Activated CD8-positive, alpha-beta T cell treated with anti-CD3 and anti-CD28 coated beads, Interleukin-2, amount 10 ng/mL, durations not matched to agents 7 days and 5 days (primary cell): ENCODE measurements at regions of chr16 and their contacts with region 1.

Region 1: DNA sequence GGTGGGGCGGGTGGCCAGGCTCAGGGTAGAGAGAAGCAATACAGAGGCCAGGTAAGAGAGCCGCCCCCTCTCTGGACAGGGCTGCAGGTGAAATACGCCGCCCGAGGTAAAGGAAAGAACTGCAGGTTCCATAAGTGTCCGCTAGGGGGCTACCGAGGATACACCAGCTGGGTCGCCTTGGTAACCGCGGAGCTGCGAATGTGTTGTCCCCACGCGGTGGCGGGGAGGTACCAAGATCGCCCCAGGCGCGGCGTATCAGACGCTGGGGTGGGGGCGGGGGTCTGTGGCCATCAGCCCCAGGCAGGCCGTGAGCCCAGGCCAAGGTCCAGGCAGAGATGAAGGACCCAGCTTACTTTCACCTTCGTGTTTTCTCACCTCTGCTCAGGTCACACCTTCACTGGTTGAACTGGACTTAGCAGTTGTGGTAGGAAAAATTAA is 18.4 kb upstream of the ZFP90 start:
- DNase-seq: peak; percentile 93
- ATAC-seq: peak; percentile 95
- H3K4me3 Mint-ChIP-seq: peak overlapping the region; percentile 18
- H3K27ac Mint-ChIP-seq: peak overlapping the region; percentile 34
- H3K4me1 Mint-ChIP-seq: peaks cover 8% of the 10 kb centered on the region
- H3K27me3 Mint-ChIP-seq: no peaks in the 10 kb centered on the region

Region 2: GRCh38 chr16:67608364-67608763 is 912.3 kb before region 1 on chr16:
- CTCF ChIA-PET with region 1: no interaction called
- POLR2A ChIA-PET with region 1: no interaction called
- DNase-seq: no peak
- ATAC-seq: no peak
- H3K4me3 Mint-ChIP-seq: no peak overlapping the region
- H3K27ac Mint-ChIP-seq: no peak overlapping the region
- H3K4me1 Mint-ChIP-seq: no peaks in the 10 kb centered on the region
- H3K27me3 Mint-ChIP-seq: no peaks in the 10 kb centered on the region

Region 3: GRCh38 chr16:68040507-68041288 is 480.0 kb before region 1 on chr16:
- CTCF ChIA-PET with region 1: no interaction called
- POLR2A ChIA-PET with region 1: no interaction called
- DNase-seq: peak; percentile 93
- ATAC-seq: peak; percentile 99
- H3K4me3 Mint-ChIP-seq: no peak overlapping the region
- H3K27ac Mint-ChIP-seq: peak overlapping the region; percentile 69
- H3K4me1 Mint-ChIP-seq: peaks cover 26% of the 10 kb centered on the region
- H3K27me3 Mint-ChIP-seq: no peaks in the 10 kb centered on the region

Region 4: DNA sequence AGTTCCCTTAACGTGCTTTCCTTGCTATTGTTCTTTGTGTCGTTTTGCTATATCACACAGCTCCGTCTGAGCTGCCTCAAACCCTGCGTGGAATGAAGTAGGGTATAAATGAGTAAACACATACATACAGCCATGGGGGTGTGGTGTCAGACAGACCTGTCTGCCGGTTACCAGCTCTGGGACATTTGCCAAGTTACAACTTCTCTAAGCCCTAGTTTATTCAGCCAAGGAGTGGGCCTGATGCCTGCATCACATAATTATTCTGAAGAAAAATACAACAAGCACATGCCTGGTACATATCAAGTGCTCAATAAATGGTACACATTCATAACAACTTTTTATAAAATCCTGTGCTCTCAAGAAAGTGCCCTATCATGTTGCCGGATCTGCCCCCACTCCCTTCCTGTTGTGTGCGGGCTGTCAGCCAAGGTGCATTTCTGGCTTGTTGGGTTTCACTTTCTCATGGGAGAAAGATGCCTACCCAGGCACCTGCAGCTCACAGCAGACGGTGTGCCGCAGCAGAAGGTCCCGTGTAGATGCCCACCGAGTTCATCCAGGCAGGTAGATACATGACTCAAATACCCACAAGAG is 102.9 kb before region 1 on chr16:
- CTCF ChIA-PET with region 1: interaction called, 18 read pairs
- POLR2A ChIA-PET with region 1: no interaction called
- DNase-seq: peak; percentile 87
- ATAC-seq: peak; percentile 97
- H3K4me3 Mint-ChIP-seq: peak overlapping the region; percentile 76
- H3K27ac Mint-ChIP-seq: peak overlapping the region; percentile 90
- H3K4me1 Mint-ChIP-seq: peaks cover 36% of the 10 kb centered on the region
- H3K27me3 Mint-ChIP-seq: no peaks in the 10 kb centered on the region

Region 5: GRCh38 chr16:68470461-68471150 is 50.1 kb before region 1 on chr16:
- CTCF ChIA-PET with region 1: interaction called, 31 read pairs
- POLR2A ChIA-PET with region 1: no interaction called
- DNase-seq: peak; percentile 38
- ATAC-seq: peak; percentile 58
- H3K4me3 Mint-ChIP-seq: peak overlapping the region; percentile 69
- H3K27ac Mint-ChIP-seq: peak overlapping the region; percentile 81
- H3K4me1 Mint-ChIP-seq: peaks cover 46% of the 10 kb centered on the region
- H3K27me3 Mint-ChIP-seq: peaks cover 10% of the 10 kb centered on the region

Region 6: DNA sequence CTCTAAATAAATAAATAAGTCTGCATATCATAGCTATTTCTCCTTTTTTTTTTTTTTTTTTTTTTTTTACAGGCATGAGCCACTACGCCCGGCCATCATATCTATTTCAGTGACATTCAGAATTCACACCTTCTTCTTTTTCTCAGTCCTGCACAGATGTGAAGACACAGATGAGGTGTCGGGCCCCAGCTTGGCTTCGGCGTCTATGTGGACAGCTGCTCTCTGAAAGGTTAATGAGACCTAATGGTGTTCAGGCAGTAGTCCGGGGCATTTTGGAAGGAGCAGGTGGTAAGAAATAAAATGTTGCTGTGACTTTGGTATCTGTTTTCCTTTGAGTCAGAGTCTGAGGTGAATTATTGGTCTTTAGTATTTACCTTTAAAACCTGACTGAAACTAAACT is 346.3 kb after region 1 on chr16:
- CTCF ChIA-PET with region 1: no interaction called
- POLR2A ChIA-PET with region 1: no interaction called
- DNase-seq: no peak
- ATAC-seq: no peak
- H3K4me3 Mint-ChIP-seq: no peak overlapping the region
- H3K27ac Mint-ChIP-seq: no peak overlapping the region
- H3K4me1 Mint-ChIP-seq: peaks cover 4% of the 10 kb centered on the region
- H3K27me3 Mint-ChIP-seq: no peaks in the 10 kb centered on the region